Head of caudate nucleus (tissue), 42 donors: ENCODE measurements at regions of chr1 and their contacts with region 1.

Region 1: GRCh38 chr1:176559878-176560277 is 96.9 kb downstream of the PAPPA2 start:
- DNase-seq: peak in 40 of 42 donors; percentile 13 to 82 (median 48)

Region 2: GRCh38 chr1:176682830-176683535 is 123.1 kb after region 1 on chr1:
- intact Hi-C with region 1: loop called (anchors 10 kb)
- DNase-seq: no peak

Region 3: GRCh38 chr1:176843352-176844297 is 283.7 kb after region 1 on chr1:
- intact Hi-C with region 1: loop called (anchors 10 kb)
- DNase-seq: peak in 26 of 42 donors; percentile 9 to 67 (median 34)

Region 4: DNA sequence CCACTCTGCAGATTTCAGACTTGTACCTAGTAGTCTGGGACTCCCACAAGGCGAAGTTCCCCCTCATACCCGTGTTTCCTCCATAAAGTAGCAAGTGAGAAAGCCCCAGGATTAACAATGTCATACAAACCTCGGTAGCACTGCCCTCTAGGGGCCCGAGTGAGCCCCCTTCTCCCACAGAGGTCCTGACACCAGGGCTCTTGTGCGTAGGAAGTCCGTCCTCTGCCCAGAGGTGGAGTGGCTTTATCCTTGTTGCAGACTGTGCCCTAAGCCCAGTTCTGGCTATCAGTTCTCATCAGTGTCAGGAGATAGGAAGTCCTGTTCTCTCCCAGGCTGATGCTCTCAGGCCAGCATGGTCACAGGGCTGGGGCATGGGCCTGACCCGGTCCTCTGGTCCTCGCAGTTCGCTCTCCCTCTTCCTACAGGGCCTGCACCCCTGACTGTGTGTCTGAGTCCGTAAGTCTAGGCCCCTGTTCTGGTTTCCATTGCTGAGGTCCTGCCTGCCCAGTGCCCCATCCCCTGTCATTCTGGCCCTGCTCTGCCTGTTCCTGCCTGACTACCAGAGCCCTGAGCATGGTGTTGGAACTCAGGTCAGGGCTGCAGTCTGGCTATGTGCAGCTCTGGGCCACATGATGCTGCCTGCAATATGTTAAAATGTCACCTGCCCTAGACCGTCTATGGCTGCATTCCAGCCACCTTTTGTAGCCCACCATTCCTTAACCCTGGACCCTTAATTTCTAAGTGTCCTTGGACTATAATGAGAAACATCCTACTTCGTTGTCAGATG is 319.1 kb after region 1 on chr1:
- intact Hi-C with region 1: loop called (anchors 10 kb)
- DNase-seq: no peak